A549 (cell line): ENCODE measurements at regions of chr11 and their contacts with region 1.

Region 1: DNA sequence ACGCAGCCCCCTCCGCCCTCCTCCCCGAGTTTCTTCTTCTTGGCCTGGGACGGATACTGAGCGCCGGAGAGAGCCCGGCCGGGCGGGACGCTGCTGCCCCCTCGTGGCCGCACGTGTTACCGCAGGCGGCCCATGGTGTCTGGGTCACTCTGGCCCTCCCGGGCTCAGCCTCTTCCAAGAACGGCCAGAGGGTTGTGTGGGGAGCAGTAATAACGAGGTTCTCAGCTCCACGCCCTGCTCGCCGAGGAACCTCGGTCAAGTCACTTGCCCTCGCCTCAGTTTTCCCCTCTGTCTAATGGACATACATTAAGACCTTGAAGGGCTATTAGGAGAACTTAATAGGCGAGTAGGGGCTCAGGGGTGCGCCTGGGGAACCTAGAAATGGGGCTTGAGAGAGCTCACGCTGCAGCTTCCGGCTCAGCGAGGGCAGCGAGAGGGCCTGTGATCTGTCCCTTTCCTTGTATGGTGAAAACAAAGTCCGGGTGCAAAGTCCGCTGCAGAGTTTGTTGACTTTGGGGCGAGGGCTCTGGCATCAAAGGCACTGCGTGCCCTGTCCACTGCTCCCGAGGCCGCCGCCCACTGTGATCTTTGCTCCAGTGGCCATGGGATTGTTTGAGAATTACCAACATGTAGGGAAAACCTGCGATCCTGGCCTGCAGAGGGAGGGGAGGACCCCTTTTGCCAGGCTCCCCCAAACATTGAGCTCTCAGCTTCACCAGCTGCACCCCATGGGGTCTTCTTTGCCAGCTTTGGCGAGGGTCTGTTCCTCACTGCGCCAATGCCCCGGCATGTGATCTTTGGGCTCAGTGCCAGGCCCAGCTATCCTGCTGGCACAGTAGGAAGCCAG is 14.4 kb upstream of the LRP5 start:
- DNase-seq: peak; percentile 81 to 82
- ATAC-seq: peak; percentile 87 to 95
- H3K4me3 ChIP-seq: peak overlapping the region; percentile 27; the same call in 2 of the 3 replicates
- H3K27ac ChIP-seq: peak overlapping the region; percentile 81 to 82
- H3K4me1 ChIP-seq: peaks cover 29% of the 10 kb centered on the region
- CTCF ChIP-seq: peak; percentile 97
- EP300 ChIP-seq: no peak
- POLR2A ChIP-seq: no peak
- RAD21 ChIP-seq: peak; percentile 89 to 96

Region 2: GRCh38 chr11:68099474-68100405 is 198.3 kb before region 1 on chr11:
- CTCF ChIA-PET with region 1: no interaction called
- POLR2A ChIA-PET with region 1: no interaction called
- DNase-seq: no peak
- ATAC-seq: no peak
- H3K4me3 ChIP-seq: no peak overlapping the region
- H3K27ac ChIP-seq: peak overlapping the region in 1 of 2 experiments; percentile 9; a peak in 1 of 6 replicates
- H3K4me1 ChIP-seq: peaks cover 8% of the 10 kb centered on the region; the same call in 2 of the 3 replicates
- CTCF ChIP-seq: no peak
- EP300 ChIP-seq: no peak
- POLR2A ChIP-seq: no peak
- RAD21 ChIP-seq: no peak

Region 3: DNA sequence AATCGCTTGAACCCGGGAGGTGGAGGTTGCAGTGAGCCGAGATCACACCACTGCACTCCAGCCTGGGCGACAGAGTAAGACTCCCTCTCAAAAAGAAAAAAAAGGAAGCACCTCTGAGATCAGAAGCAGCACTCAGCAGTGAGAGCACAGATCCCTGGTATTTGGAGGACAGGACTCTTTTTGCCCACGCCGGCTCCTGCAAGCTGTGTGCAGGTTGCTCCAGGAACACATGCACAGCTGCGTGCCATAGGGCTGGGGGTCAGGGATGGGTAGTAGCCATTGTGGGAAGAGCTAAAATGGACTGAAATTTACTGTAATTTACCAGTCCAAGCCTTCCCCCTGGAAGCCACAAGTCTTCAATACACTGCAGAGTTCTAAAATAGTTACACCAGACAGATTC is 62.4 kb before region 1 on chr11:
- CTCF ChIA-PET with region 1: interaction called, 10 read pairs
- POLR2A ChIA-PET with region 1: no interaction called
- DNase-seq: no peak
- ATAC-seq: no peak
- H3K4me3 ChIP-seq: no peak overlapping the region
- H3K27ac ChIP-seq: no peak overlapping the region
- H3K4me1 ChIP-seq: no peaks in the 10 kb centered on the region
- CTCF ChIP-seq: no peak
- EP300 ChIP-seq: no peak
- POLR2A ChIP-seq: no peak
- RAD21 ChIP-seq: no peak

Region 4: GRCh38 chr11:68266121-68266891 is 31.7 kb before region 1 on chr11:
- CTCF ChIA-PET with region 1: interaction called, 131 read pairs
- POLR2A ChIA-PET with region 1: interaction called, 13 read pairs
- DNase-seq: no peak
- ATAC-seq: no peak
- H3K4me3 ChIP-seq: no peak overlapping the region
- H3K27ac ChIP-seq: no peak overlapping the region
- H3K4me1 ChIP-seq: peaks cover 17% of the 10 kb centered on the region
- CTCF ChIP-seq: no peak
- EP300 ChIP-seq: no peak
- POLR2A ChIP-seq: no peak
- RAD21 ChIP-seq: no peak

Region 5: GRCh38 chr11:68312117-68312779 is 14.2 kb after region 1 on chr11 and contains the start of gene LRP5:
- CTCF ChIA-PET with region 1: interaction called, 75 read pairs
- POLR2A ChIA-PET with region 1: interaction called, 3 read pairs
- DNase-seq: no peak
- ATAC-seq: peak in 1 of 2 experiments; percentile 22; a peak in 3 of 6 replicates
- H3K4me3 ChIP-seq: peak within 1 kb of the TSS; percentile 91
- H3K27ac ChIP-seq: peak within 1 kb of the TSS; percentile 90 to 99
- H3K4me1 ChIP-seq: peaks cover 32% of the 10 kb centered on the region
- CTCF ChIP-seq: peak; percentile 8; the same call in 1 of the 3 replicates
- EP300 ChIP-seq: no peak
- POLR2A ChIP-seq: peak; percentile 25; the same call in 1 of the 2 replicates
- RAD21 ChIP-seq: no peak
- polyA plus RNA-seq, gene LRP5: 10.9 and 15.9 TPM in 2 replicates

Region 6: DNA sequence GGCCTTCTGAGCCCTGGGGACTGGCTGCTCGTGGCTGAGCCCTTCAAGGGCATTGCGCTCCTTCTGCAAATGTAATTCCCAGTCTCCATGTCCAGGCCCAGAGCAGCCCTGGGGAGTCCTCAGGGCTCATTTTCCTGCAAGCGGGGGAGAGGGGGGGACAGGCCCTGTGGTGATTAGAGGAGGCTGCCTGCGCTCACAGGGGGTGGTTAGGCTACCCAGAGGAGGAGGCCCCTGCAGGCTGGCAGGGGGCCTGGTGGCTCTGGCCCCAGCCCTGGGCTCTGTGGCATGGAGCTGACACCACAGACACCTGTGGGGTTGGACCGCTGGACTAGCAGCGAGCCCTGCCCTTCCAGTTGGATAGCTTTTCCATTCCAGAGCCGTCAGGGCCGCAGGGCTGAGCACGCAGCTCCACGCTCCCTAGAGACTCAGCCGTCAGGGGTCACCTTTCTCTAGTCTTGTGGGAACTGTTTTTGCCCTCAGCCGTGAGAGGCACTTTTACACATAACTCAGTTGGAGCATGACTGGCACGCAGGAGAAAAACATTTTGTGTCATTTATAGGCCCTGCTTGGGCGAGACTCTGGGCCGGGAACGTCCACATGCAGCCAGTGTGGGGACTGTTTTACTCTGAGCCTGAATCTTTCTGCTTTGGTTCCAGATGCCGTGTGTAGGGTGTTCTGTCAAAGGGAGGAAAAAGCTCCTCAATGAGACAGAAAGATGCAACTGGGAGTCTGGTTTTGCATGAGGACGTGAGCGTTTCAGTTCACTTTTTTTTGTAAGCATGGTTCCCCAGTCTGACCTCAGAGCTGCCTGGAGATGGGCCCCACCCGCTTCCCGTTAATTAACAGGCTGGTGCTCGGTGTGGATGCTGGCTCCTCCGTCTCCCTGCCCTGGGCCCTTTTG is 72.4 kb after region 1 on chr11:
- CTCF ChIA-PET with region 1: interaction called, 19 read pairs
- POLR2A ChIA-PET with region 1: no interaction called
- DNase-seq: no peak
- ATAC-seq: no peak
- H3K4me3 ChIP-seq: no peak overlapping the region
- H3K27ac ChIP-seq: no peak overlapping the region
- H3K4me1 ChIP-seq: peaks cover 4% of the 10 kb centered on the region; the same call in 1 of the 3 replicates
- CTCF ChIP-seq: no peak
- EP300 ChIP-seq: no peak
- POLR2A ChIP-seq: no peak
- RAD21 ChIP-seq: no peak